ENCODE measurements at regions of chr12 and their contacts with region 1.

Region 1: GRCh38 chr12:116920939-116921338 is 10.2 kb downstream of the FBXW8 start:
- DNase-seq: no peak
- H3K4me3 ChIP-seq: no peak overlapping the region
- H3K27ac ChIP-seq: no peak overlapping the region
- H3K4me1 ChIP-seq: peaks cover 46% of the 10 kb centered on the region
- H3K27me3 ChIP-seq: no peaks in the 10 kb centered on the region
- CTCF ChIP-seq: no peak

Region 2: GRCh38 chr12:116087962-116088361 is 833.0 kb before region 1 on chr12:
- CTCF ChIA-PET with region 1: no interaction called
- POLR2A ChIA-PET with region 1: interaction called, 23 read pairs
- intact Hi-C with region 1: no loop called
- DNase-seq: no peak
- H3K4me3 ChIP-seq: no peak overlapping the region
- H3K27ac ChIP-seq: no peak overlapping the region
- H3K4me1 ChIP-seq: peaks cover 17% of the 10 kb centered on the region
- H3K27me3 ChIP-seq: no peaks in the 10 kb centered on the region
- CTCF ChIP-seq: no peak

Region 3: GRCh38 chr12:116441292-116441691 is 479.6 kb before region 1 on chr12:
- CTCF ChIA-PET with region 1: no interaction called
- POLR2A ChIA-PET with region 1: no interaction called
- intact Hi-C with region 1: no loop called
- DNase-seq: no peak
- H3K4me3 ChIP-seq: no peak overlapping the region
- H3K27ac ChIP-seq: no peak overlapping the region
- H3K4me1 ChIP-seq: no peaks in the 10 kb centered on the region
- H3K27me3 ChIP-seq: no peaks in the 10 kb centered on the region
- CTCF ChIP-seq: no peak